ENCODE measurements at regions of chr15 and their contacts with region 1.

Region 1: GRCh38 chr15:82540055-82540983 is at the start of gene RPS17:
- DNase-seq: peak; percentile 97 to 98
- ATAC-seq: peak; percentile 80 to 96
- H3K4me3 ChIP-seq: peak within 1 kb of the TSS; percentile 79
- H3K27ac ChIP-seq: peak within 1 kb of the TSS; percentile 89 to 94
- H3K4me1 ChIP-seq: peaks cover 28% of the 10 kb centered on the region
- CTCF ChIP-seq: peak; percentile 99
- EP300 ChIP-seq: peak in 1 of 2 experiments; percentile 48; a peak in 1 of 5 replicates
- POLR2A ChIP-seq: peak; percentile 90
- RAD21 ChIP-seq: peak in 1 of 2 experiments; percentile 64; a peak in 4 of 5 replicates
- polyA plus RNA-seq, gene RPS17: 5,298 and 6,127 TPM in 2 replicates

Region 2: GRCh38 chr15:82554849-82555248 is 14.5 kb after region 1 on chr15:
- CTCF ChIA-PET with region 1: interaction called, 12 read pairs
- POLR2A ChIA-PET with region 1: interaction called, 10 read pairs
- DNase-seq: no peak
- ATAC-seq: no peak
- H3K4me3 ChIP-seq: no peak overlapping the region
- H3K27ac ChIP-seq: no peak overlapping the region
- H3K4me1 ChIP-seq: no peaks in the 10 kb centered on the region
- CTCF ChIP-seq: no peak
- EP300 ChIP-seq: no peak
- POLR2A ChIP-seq: no peak
- RAD21 ChIP-seq: no peak

Region 3: DNA sequence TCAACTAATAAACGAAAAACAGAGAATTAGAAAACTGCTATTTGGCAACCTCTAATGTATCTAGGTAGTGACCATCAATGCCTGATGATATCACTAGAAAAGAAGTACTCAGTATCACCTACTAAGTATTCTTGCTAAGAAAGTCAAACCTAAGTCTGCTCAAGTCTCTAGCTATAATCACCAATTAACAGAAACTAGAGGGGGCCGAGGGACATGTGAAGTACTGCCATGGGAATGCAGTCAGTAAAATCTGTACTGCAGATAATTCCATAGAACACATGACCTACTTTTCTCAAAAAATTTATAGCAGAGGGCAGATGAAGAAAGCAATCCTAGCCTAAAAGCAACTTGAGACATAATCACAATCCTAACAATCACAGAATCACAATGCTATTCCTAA is 55.4 kb after region 1 on chr15:
- CTCF ChIA-PET with region 1: no interaction called
- POLR2A ChIA-PET with region 1: no interaction called
- DNase-seq: no peak
- ATAC-seq: no peak
- H3K4me3 ChIP-seq: no peak overlapping the region
- H3K27ac ChIP-seq: no peak overlapping the region
- H3K4me1 ChIP-seq: no peaks in the 10 kb centered on the region
- CTCF ChIP-seq: no peak
- EP300 ChIP-seq: no peak
- POLR2A ChIP-seq: no peak
- RAD21 ChIP-seq: no peak

Region 4: DNA sequence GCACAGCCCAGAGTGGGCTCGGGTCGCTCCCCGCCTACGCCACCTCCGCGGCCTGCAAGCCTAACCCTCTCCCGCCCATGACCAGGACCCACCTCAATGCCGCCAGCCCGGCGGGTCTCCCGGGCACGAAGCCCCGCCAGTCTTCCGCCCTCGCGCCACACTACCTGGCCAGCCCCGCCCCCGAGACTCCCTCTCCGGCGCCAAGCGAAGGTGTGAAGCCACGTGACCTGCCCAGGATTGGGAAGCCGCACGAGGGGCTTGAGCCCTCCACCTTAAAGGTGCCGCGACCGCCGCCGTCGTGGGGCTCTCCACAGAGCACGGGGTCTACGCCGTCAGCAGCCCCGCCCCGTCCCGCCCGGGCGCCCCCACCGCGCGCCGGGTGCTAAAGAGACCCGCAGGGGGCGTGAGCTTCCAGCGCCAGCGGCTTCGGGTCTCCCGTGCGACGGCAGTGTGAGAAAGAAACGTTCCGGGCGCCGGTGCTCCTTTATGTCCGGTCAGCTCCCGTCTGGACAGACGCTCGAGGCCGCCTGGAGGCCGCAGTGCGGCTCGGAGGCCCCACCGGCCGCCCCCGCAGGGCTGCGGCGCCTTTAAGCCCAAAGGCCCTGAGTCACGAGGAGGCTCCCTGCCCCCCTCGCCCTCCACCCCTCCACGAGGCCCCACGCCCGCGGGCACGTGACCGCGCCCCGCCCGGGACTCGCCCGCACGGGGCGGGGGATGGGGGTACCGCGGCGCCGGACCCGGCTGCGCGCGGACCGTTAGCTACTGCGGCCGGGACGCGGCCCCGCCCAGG is 106.9 kb after region 1 on chr15 and contains the start of gene CPEB1:
- CTCF ChIA-PET with region 1: interaction called, 3 read pairs
- POLR2A ChIA-PET with region 1: interaction called, 19 read pairs
- DNase-seq: peak; percentile 66
- ATAC-seq: peak; percentile 85 to 88
- H3K4me3 ChIP-seq: peak within 1 kb of the TSS; percentile 71
- H3K27ac ChIP-seq: peak within 1 kb of the TSS; percentile 83 to 91
- H3K4me1 ChIP-seq: peaks cover 6% of the 10 kb centered on the region; the same call in 2 of the 3 replicates
- CTCF ChIP-seq: peak; percentile 35; the same call in 2 of the 3 replicates
- EP300 ChIP-seq: no peak
- POLR2A ChIP-seq: no peak
- RAD21 ChIP-seq: no peak; a peak in 1 of 5 replicates
- polyA plus RNA-seq, gene CPEB1: 7.0 and 7.7 TPM in 2 replicates

Region 5: GRCh38 chr15:82985688-82986441 is 445.5 kb after region 1 on chr15 and contains the start of gene RAMAC:
- CTCF ChIA-PET with region 1: no interaction called
- POLR2A ChIA-PET with region 1: interaction called, 17 read pairs
- DNase-seq: peak; percentile 93 to 98
- ATAC-seq: peak; percentile 99
- H3K4me3 ChIP-seq: peak within 1 kb of the TSS; percentile 59
- H3K27ac ChIP-seq: peak within 1 kb of the TSS; percentile 95 to 96
- H3K4me1 ChIP-seq: peaks cover 13% of the 10 kb centered on the region
- CTCF ChIP-seq: no peak
- EP300 ChIP-seq: no peak
- POLR2A ChIP-seq: peak; percentile 45; the same call in 1 of the 2 replicates
- RAD21 ChIP-seq: no peak
- polyA plus RNA-seq, gene RAMAC: 50.3 and 68.1 TPM in 2 replicates